ENCODE measurements at regions of chr2 and their contacts with region 1.

Region 1: GRCh38 chr2:129849559-129850160 is 129.8 kb upstream of the RAB6C start:
- DNase-seq: no peak
- H3K4me3 ChIP-seq: no peak overlapping the region
- H3K27ac ChIP-seq: no peak overlapping the region
- H3K4me1 ChIP-seq: no peaks in the 10 kb centered on the region
- H3K27me3 ChIP-seq: peaks cover 0 to 5% of the 10 kb centered on the region in 2 donors
- CTCF ChIP-seq: peak; percentile 64 to 68

Region 2: GRCh38 chr2:128736689-128737545 is 1112.7 kb before region 1 on chr2:
- intact Hi-C with region 1: loop called (anchors 10 kb)
- DNase-seq: peak; percentile 68 to 87
- H3K4me3 ChIP-seq: peak overlapping the region; percentile 16 to 40
- H3K27ac ChIP-seq: no peak overlapping the region
- H3K4me1 ChIP-seq: peaks cover 0 to 15% (median 10%) of the 10 kb centered on the region in 4 donors
- H3K27me3 ChIP-seq: no peaks in the 10 kb centered on the region
- CTCF ChIP-seq: peak; percentile 96 to 100